Calu3 (cell line): ENCODE measurements at regions of chr17 and their contacts with region 1.

Region 1: GRCh38 chr17:27892866-27893769 is at the start of gene LYRM9:
- DNase-seq: peak; percentile 96
- H3K4me3 Mint-ChIP-seq: peak within 1 kb of the TSS; percentile 65
- H3K27ac Mint-ChIP-seq: no peak within 1 kb of the TSS
- H3K4me1 Mint-ChIP-seq: peaks cover 11% of the 10 kb centered on the region
- H3K27me3 Mint-ChIP-seq: peaks cover 58% of the 10 kb centered on the region
- CTCF ChIP-seq: peak; percentile 89
- total RNA-seq, gene LYRM9: 1.5 and 1.7 TPM in 2 replicates

Region 2: GRCh38 chr17:27805520-27806146 is 87.5 kb before region 1 on chr17:
- CTCF ChIA-PET with region 1: interaction called, 14 read pairs
- intact Hi-C with region 1: no loop called
- DNase-seq: peak; percentile 85
- H3K4me3 Mint-ChIP-seq: peak overlapping the region; percentile 55
- H3K27ac Mint-ChIP-seq: peak overlapping the region; percentile 65
- H3K4me1 Mint-ChIP-seq: peaks cover 17% of the 10 kb centered on the region
- H3K27me3 Mint-ChIP-seq: peaks cover 37% of the 10 kb centered on the region
- CTCF ChIP-seq: peak; percentile 73

Region 3: DNA sequence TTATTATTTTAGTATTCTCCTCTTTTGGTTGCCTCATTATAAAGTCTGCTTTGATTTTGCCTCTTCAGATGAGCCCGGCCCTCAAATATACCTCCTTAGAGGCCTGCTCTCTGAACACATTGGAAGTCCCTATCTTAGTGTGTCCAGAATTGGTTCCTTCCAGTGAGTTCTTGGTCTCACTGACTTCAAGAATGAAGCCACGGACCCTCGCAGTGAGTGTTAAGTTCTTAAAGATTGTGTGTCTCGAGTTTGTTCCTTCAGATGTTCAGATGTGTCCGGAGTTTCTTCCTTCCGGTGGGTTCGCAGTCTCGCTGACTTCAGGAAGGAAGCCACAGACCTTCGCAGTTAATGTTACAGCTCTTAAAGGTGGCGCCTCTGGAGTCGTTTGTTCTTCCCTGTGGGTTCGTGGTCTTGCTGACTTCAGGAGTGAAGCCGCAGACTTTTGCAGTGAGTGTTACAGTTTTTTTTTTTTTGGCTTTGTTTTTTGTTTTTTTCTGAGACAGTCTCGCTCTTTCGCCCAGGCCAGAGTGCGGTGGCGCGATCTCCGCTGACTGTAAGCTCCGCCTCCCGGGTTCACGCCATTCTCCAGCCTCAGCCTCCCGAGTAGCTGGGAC is 47.0 kb before region 1 on chr17:
- CTCF ChIA-PET with region 1: no interaction called
- intact Hi-C with region 1: loop called (anchors 10 kb)
- DNase-seq: no peak
- H3K4me3 Mint-ChIP-seq: no peak overlapping the region
- H3K27ac Mint-ChIP-seq: no peak overlapping the region
- H3K4me1 Mint-ChIP-seq: no peaks in the 10 kb centered on the region
- H3K27me3 Mint-ChIP-seq: peaks cover 29% of the 10 kb centered on the region
- CTCF ChIP-seq: no peak

Region 4: DNA sequence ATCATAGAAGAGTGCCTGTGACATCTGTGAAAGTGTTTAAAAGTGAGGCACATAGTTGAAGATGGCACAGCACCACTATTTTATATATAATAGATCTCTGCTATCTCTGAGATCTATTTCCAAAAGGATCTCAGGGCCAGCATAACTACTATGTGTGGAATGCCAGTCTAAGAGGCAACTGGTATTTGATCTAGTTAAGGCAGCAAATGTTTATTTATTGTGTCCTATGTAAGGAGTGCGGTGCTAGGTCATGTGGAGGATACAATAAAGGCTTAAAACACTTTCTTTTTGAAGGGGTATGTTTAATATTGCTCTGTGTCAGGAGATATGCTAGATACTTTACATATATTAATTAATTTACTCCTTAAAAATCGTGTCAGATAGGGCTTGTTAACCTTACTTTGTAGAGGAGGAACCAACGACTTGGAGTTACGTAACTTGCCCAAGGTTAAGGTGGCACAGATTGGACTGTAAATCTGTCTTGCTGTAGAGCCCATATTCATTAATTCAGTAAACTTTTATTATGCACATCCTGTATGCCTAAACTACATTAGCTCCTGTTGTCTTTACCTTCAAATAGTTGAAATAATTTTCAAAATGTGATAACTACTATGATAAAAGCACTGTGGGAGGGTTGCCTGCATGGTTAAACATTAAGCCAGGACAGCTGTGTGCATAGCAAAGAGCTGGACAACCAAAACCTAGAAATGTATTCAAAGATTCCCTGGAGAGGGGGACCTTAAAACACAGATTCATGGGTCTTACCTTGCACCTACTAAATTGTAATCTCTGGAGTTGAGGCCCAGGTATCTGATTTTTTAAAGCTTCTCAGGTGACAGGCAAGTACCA is 232.6 kb after region 1 on chr17:
- CTCF ChIA-PET with region 1: no interaction called
- intact Hi-C with region 1: loop called (anchors 10 kb)
- DNase-seq: no peak
- H3K4me3 Mint-ChIP-seq: no peak overlapping the region
- H3K27ac Mint-ChIP-seq: peak overlapping the region; percentile 57
- H3K4me1 Mint-ChIP-seq: peaks cover 35% of the 10 kb centered on the region
- H3K27me3 Mint-ChIP-seq: no peaks in the 10 kb centered on the region
- CTCF ChIP-seq: no peak

Region 5: GRCh38 chr17:28193241-28193640 is 300.1 kb after region 1 on chr17:
- CTCF ChIA-PET with region 1: interaction called, 4 read pairs
- intact Hi-C with region 1: loop called (anchors 10 kb)
- DNase-seq: peak; percentile 4
- H3K4me3 Mint-ChIP-seq: no peak overlapping the region
- H3K27ac Mint-ChIP-seq: no peak overlapping the region
- H3K4me1 Mint-ChIP-seq: no peaks in the 10 kb centered on the region
- H3K27me3 Mint-ChIP-seq: no peaks in the 10 kb centered on the region
- CTCF ChIP-seq: no peak

Region 6: GRCh38 chr17:28228126-28228857 is 335.2 kb after region 1 on chr17:
- CTCF ChIA-PET with region 1: interaction called, 3 read pairs
- intact Hi-C with region 1: loop called (anchors 5 kb)
- DNase-seq: no peak
- H3K4me3 Mint-ChIP-seq: peak overlapping the region; percentile 85
- H3K27ac Mint-ChIP-seq: peak overlapping the region; percentile 68
- H3K4me1 Mint-ChIP-seq: peaks cover 14% of the 10 kb centered on the region
- H3K27me3 Mint-ChIP-seq: no peaks in the 10 kb centered on the region
- CTCF ChIP-seq: no peak

Region 7: DNA sequence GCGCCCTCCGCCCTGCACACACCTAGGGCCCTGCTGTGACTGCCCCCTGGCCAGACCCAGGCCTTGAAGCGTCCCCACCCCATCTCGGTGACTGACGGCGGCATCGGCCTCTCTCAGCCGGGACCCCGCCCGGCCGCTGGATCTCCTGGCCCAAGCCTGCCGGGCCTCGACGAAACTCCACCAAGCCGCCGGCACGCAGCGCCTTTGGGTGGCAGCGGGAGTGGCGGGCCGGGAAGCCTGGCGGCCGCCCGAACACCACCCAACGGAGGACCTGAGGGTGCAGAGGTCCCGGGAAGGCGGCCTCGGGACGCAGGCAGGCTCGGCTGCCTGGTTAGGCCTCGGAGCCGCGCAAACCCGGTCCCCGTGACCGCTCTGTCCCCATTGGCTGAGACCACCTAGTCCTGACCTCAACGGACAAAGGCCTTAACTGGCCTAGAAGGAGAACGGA is 413.9 kb after region 1 on chr17:
- CTCF ChIA-PET with region 1: no interaction called
- intact Hi-C with region 1: loop called (anchors 10 kb)
- DNase-seq: no peak
- H3K4me3 Mint-ChIP-seq: no peak overlapping the region
- H3K27ac Mint-ChIP-seq: no peak overlapping the region
- H3K4me1 Mint-ChIP-seq: no peaks in the 10 kb centered on the region
- H3K27me3 Mint-ChIP-seq: no peaks in the 10 kb centered on the region
- CTCF ChIP-seq: no peak